ENCODE measurements at regions of chr5 and their contacts with region 1.

Region 1: DNA sequence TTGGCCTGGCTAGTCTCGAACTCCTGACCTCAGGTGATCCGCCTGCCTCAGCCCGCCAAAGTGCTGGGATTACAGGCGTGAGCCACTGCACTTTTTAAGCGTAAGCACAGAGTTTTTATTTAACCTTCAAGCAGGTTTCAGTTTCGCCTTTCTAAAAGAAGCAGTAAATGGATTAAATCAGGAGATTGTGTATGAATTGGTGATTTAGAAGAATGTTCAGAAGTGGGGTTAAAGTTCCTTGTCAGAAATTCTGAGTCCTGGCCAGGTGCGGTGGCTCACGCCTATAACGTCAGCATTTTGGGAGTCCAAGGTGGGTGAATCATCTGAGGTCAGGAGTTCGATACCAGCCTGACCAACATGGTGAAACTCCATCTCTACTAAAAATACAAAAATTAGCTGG is 12.2 kb downstream of the HSPA4 start:
- DNase-seq: peak; percentile 58
- H3K4me3 Mint-ChIP-seq: peak overlapping the region; percentile 3
- H3K27ac Mint-ChIP-seq: peak overlapping the region; percentile 24
- H3K4me1 Mint-ChIP-seq: peaks cover 51% of the 10 kb centered on the region
- H3K27me3 Mint-ChIP-seq: no peaks in the 10 kb centered on the region
- CTCF ChIP-seq: no peak

Region 2: GRCh38 chr5:132905867-132906295 is 158.1 kb before region 1 on chr5:
- CTCF ChIA-PET with region 1: no interaction called
- intact Hi-C with region 1: loop called (anchors 10 kb)
- DNase-seq: no peak
- H3K4me3 Mint-ChIP-seq: no peak overlapping the region
- H3K27ac Mint-ChIP-seq: no peak overlapping the region
- H3K4me1 Mint-ChIP-seq: peaks cover 8% of the 10 kb centered on the region
- H3K27me3 Mint-ChIP-seq: no peaks in the 10 kb centered on the region
- CTCF ChIP-seq: no peak